ENCODE measurements at regions of chrX and their contacts with region 1.

Region 1: GRCh38 chrX:18931972-18932371 is 51.9 kb downstream of the PHKA2 start:
- DNase-seq: no peak
- H3K4me3 ChIP-seq: no peak overlapping the region
- H3K27ac ChIP-seq: no peak overlapping the region
- H3K4me1 ChIP-seq: no peaks in the 10 kb centered on the region
- H3K27me3 ChIP-seq: no peaks in the 10 kb centered on the region
- CTCF ChIP-seq: peak in 2 of 3 experiments; percentile 57 to 63; a peak in 3 of 4 replicates
- EP300 ChIP-seq: no peak
- POLR2A ChIP-seq: no peak
- RAD21 ChIP-seq: peak; percentile 63 to 75

Region 2: GRCh38 chrX:19017271-19017670 is 85.3 kb after region 1 on chrX:
- CTCF ChIA-PET with region 1: interaction called, 10 read pairs
- POLR2A ChIA-PET with region 1: no interaction called
- DNase-seq: no peak
- H3K4me3 ChIP-seq: no peak overlapping the region
- H3K27ac ChIP-seq: no peak overlapping the region
- H3K4me1 ChIP-seq: no peaks in the 10 kb centered on the region
- H3K27me3 ChIP-seq: no peaks in the 10 kb centered on the region
- CTCF ChIP-seq: peak; percentile 34 to 79 (median 72)
- EP300 ChIP-seq: no peak
- POLR2A ChIP-seq: no peak
- RAD21 ChIP-seq: peak; percentile 80 to 83

Measured in H1 (cell line).